ENCODE measurements at regions of chr7 and their contacts with region 1.

Region 1: GRCh38 chr7:45136106-45137060 is 21.2 kb upstream of the RAMP3 start:
- DNase-seq: peak; percentile 67
- ATAC-seq: peak; percentile 75
- H3K4me3 ChIP-seq: no peak overlapping the region
- H3K27ac ChIP-seq: no peak overlapping the region
- H3K4me1 ChIP-seq: 0 out of 2 replicates have a peak, but pooled peaks cover 4% of the 10 kb centered on the region
- H3K27me3 ChIP-seq: peaks cover 4 to 11% of the 10 kb centered on the region in 2 experiments; a peak in 3 of 5 replicates
- CTCF ChIP-seq: peak; percentile 89
- EP300 ChIP-seq: no peak
- POLR2A ChIP-seq: no peak
- RAD21 ChIP-seq: peak; percentile 77

Region 2: DNA sequence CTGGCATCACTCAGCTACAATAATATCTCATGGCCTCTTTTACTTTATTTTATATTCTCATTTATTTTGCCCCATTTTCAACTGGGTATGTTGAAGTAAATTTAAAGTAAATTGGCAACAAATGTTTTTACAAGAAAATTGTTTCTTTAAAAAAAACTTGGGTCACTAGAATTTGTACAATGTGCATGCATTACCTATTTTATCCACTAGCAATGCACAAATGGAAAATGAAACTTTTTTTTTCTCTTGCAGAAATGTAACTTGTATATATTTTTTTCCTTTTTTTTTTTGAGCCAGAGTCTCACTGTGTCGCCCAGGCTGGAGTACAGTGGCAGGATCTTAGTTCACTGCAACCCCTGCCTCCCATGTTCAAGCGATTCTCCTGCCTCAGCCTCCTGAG is 278.2 kb before region 1 on chr7:
- CTCF ChIA-PET with region 1: interaction called, 10 read pairs
- POLR2A ChIA-PET with region 1: no interaction called
- in situ Hi-C with region 1: loop called (anchors 10 kb)
- intact Hi-C with region 1: loop called (anchors 1 kb)
- DNase-seq: no peak
- ATAC-seq: no peak
- H3K4me3 ChIP-seq: no peak overlapping the region
- H3K27ac ChIP-seq: no peak overlapping the region
- H3K4me1 ChIP-seq: no peaks in the 10 kb centered on the region
- H3K27me3 ChIP-seq: no peaks in the 10 kb centered on the region
- CTCF ChIP-seq: no peak
- EP300 ChIP-seq: no peak
- POLR2A ChIP-seq: no peak
- RAD21 ChIP-seq: no peak

Region 3: GRCh38 chr7:44964384-44964825 is 172.0 kb before region 1 on chr7:
- CTCF ChIA-PET with region 1: interaction called, 35 read pairs
- POLR2A ChIA-PET with region 1: no interaction called
- in situ Hi-C with region 1: loop called (anchors 5 kb)
- intact Hi-C with region 1: loop called (anchors 1 kb)
- DNase-seq: no peak
- ATAC-seq: peak; percentile 45
- H3K4me3 ChIP-seq: peak overlapping the region in 1 of 3 experiments; percentile 9; a peak in 1 of 6 replicates
- H3K27ac ChIP-seq: no peak overlapping the region
- H3K4me1 ChIP-seq: peaks cover 26% of the 10 kb centered on the region
- H3K27me3 ChIP-seq: peaks cover 1 to 11% of the 10 kb centered on the region in 2 experiments; a peak in 2 of 5 replicates
- CTCF ChIP-seq: peak; percentile 59
- EP300 ChIP-seq: no peak
- POLR2A ChIP-seq: no peak
- RAD21 ChIP-seq: no peak

Region 4: DNA sequence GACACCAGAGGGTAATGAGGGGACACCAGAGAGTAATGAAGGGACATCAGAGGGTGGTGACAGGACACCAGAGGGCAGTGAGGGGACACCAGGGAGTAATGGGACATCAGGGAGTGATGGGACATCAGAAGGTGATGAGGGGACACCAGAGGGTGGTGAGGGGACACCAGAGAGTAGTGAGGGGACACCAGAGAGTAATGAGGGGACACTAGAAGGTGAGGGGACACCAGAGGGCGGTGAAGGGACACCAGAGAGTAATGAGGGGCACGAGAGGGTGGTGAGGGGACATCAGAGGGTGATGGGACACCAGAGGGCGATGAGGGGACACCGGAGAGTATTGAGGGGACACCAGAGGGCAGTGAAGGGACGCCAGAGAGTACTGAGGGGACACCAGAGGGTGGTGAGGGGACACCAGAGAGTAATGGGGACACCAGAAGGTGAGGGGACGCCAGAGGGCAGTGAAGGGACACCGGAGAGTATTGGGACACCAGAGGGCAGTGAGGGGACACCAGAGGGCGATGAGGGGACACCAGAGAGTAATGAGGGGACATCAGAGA is 58.2 kb before region 1 on chr7:
- CTCF ChIA-PET with region 1: interaction called, 7 read pairs
- POLR2A ChIA-PET with region 1: no interaction called
- in situ Hi-C with region 1: no loop called
- intact Hi-C with region 1: loop called (anchors 1 kb)
- DNase-seq: peak; percentile 34
- ATAC-seq: peak; percentile 46
- H3K4me3 ChIP-seq: no peak overlapping the region
- H3K27ac ChIP-seq: no peak overlapping the region
- H3K4me1 ChIP-seq: no peaks in the 10 kb centered on the region
- H3K27me3 ChIP-seq: peaks cover 0 to 10% of the 10 kb centered on the region in 2 experiments; a peak in 1 of 5 replicates
- CTCF ChIP-seq: peak; percentile 54
- EP300 ChIP-seq: no peak
- POLR2A ChIP-seq: no peak
- RAD21 ChIP-seq: peak; percentile 30; the same call in 1 of the 2 replicates

Region 5: GRCh38 chr7:45098983-45099839 is 37.2 kb before region 1 on chr7:
- CTCF ChIA-PET with region 1: no interaction called
- POLR2A ChIA-PET with region 1: no interaction called
- in situ Hi-C with region 1: no loop called
- intact Hi-C with region 1: no loop called
- DNase-seq: no peak
- ATAC-seq: peak; percentile 51
- H3K4me3 ChIP-seq: no peak overlapping the region
- H3K27ac ChIP-seq: no peak overlapping the region
- H3K4me1 ChIP-seq: no peaks in the 10 kb centered on the region
- H3K27me3 ChIP-seq: no peaks in the 10 kb centered on the region
- CTCF ChIP-seq: no peak
- EP300 ChIP-seq: no peak
- POLR2A ChIP-seq: peak in 1 of 2 experiments; percentile 27; a peak in 1 of 4 replicates
- RAD21 ChIP-seq: no peak